BJ (cell line): ENCODE measurements at regions of chr10 and their contacts with region 1.

Region 1: GRCh38 chr10:66892871-66893270 is 33.0 kb upstream of the LRRTM3 start:
- DNase-seq: no peak
- H3K4me3 ChIP-seq: no peak overlapping the region
- H3K27me3 ChIP-seq: no peaks in the 10 kb centered on the region
- CTCF ChIP-seq: no peak

Region 2: GRCh38 chr10:66723608-66724400 is 169.1 kb before region 1 on chr10:
- CTCF ChIA-PET with region 1: no interaction called
- POLR2A ChIA-PET with region 1: no interaction called
- DNase-seq: no peak
- H3K4me3 ChIP-seq: no peak overlapping the region
- H3K27me3 ChIP-seq: no peaks in the 10 kb centered on the region
- CTCF ChIP-seq: no peak

Region 3: DNA sequence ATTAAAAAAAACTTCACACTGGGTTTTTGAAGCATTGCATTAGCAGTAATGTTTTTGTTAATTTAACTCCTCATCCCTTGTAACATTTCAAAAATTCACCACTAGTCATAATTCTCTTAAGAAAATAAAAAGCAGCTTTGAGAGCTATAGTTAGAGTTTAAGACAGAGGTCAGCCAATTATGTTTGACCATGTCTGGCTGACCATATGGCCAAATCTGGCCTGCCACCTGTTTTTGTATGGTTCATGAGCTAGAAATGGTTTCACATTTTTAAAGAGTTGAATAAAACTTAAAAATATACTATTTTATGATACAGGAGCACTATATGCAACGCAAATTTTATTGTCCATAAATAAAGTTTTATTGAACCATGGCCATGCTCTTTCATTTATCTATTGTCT is 40.1 kb before region 1 on chr10:
- CTCF ChIA-PET with region 1: no interaction called
- POLR2A ChIA-PET with region 1: interaction called, 15 read pairs
- DNase-seq: no peak
- H3K4me3 ChIP-seq: no peak overlapping the region
- H3K27me3 ChIP-seq: no peaks in the 10 kb centered on the region
- CTCF ChIP-seq: no peak

Region 4: GRCh38 chr10:66917104-66917503 is 24.2 kb after region 1 on chr10:
- CTCF ChIA-PET with region 1: no interaction called
- POLR2A ChIA-PET with region 1: no interaction called
- DNase-seq: no peak
- H3K4me3 ChIP-seq: no peak overlapping the region
- H3K27me3 ChIP-seq: no peaks in the 10 kb centered on the region
- CTCF ChIP-seq: no peak

Region 5: GRCh38 chr10:67075398-67075971 is 182.6 kb after region 1 on chr10:
- CTCF ChIA-PET with region 1: no interaction called
- POLR2A ChIA-PET with region 1: no interaction called
- DNase-seq: no peak
- H3K4me3 ChIP-seq: no peak overlapping the region
- H3K27me3 ChIP-seq: no peaks in the 10 kb centered on the region
- CTCF ChIP-seq: no peak

Region 6: GRCh38 chr10:67269828-67270227 is 377.0 kb after region 1 on chr10:
- CTCF ChIA-PET with region 1: no interaction called
- POLR2A ChIA-PET with region 1: no interaction called
- DNase-seq: no peak
- H3K4me3 ChIP-seq: no peak overlapping the region
- H3K27me3 ChIP-seq: no peaks in the 10 kb centered on the region
- CTCF ChIP-seq: no peak